Activated naive CD4-positive, alpha-beta T cell treated with anti-CD3 and anti-CD28 coated beads for 36 hours (primary cell): ENCODE measurements at regions of chr12 and their contacts with region 1.

Region 1: GRCh38 chr12:56333679-56334489 is at the start of gene PAN2:
- DNase-seq: peak; percentile 98
- H3K4me3 Mint-ChIP-seq: peak within 1 kb of the TSS; percentile 97
- H3K27ac Mint-ChIP-seq: peak within 1 kb of the TSS; percentile 100
- H3K4me1 Mint-ChIP-seq: peaks cover 44% of the 10 kb centered on the region
- H3K27me3 Mint-ChIP-seq: no peaks in the 10 kb centered on the region
- total RNA-seq, gene PAN2: 82.7 to 85.4 TPM

Region 2: GRCh38 chr12:54984658-54985376 is 1349.1 kb before region 1 on chr12 and contains the start of gene TESPA1:
- CTCF ChIA-PET with region 1: no interaction called
- intact Hi-C with region 1: loop called (anchors 10 kb)
- DNase-seq: peak; percentile 94
- H3K4me3 Mint-ChIP-seq: peak within 1 kb of the TSS; percentile 75
- H3K27ac Mint-ChIP-seq: peak within 1 kb of the TSS; percentile 89
- H3K4me1 Mint-ChIP-seq: peaks cover 56% of the 10 kb centered on the region
- H3K27me3 Mint-ChIP-seq: no peaks in the 10 kb centered on the region
- total RNA-seq, gene TESPA1: 43.9 to 45.1 TPM

Region 3: GRCh38 chr12:56189176-56189917 is 144.5 kb before region 1 on chr12 and contains the start of gene SMARCC2:
- CTCF ChIA-PET with region 1: interaction called, 3 read pairs
- intact Hi-C with region 1: loop called (anchors 1 kb)
- DNase-seq: peak; percentile 93
- H3K4me3 Mint-ChIP-seq: peak within 1 kb of the TSS; percentile 95
- H3K27ac Mint-ChIP-seq: peak within 1 kb of the TSS; percentile 92
- H3K4me1 Mint-ChIP-seq: peaks cover 33% of the 10 kb centered on the region
- H3K27me3 Mint-ChIP-seq: no peaks in the 10 kb centered on the region
- total RNA-seq, gene SMARCC2: 75.8 to 79.0 TPM

Region 4: DNA sequence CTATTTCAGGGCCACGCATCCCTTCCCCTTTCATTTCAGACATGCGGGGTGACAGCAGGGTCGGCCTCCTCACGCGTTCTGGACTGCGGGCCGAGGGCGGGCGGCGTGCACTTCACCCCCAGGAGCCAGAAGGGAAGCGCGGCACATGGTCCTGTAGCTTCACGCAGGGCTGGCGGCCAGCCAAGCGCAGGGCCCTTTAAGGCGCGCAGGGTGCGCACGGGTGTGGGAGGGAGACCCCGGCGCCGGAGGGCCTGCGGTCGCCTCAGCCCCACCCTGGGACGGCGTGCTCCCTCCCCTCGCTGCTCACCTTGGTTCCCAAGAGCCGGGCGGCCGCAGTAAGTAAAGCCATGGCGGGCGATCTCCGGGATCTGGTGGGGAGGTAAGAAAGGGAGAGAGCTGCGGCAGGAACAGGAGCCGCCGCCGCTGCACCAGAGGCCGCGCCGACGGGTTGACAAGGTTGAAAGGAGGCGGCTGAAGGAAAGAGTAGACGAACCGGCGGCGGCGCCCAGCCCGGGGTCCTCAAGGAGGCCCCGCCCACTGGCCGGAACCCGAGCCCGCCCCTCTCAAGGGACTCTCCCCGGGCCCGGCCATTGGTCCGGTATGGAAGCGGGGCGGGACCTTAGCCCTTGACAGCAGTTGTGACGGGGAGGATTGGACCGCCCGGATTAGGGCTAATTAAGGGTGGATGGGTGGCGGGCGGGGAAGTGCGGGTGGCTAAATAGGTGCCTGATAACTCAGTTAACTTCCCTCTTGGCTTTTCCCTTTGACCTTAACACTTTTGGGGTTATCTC is 33.8 kb before region 1 on chr12 and contains the start of gene CS:
- CTCF ChIA-PET with region 1: interaction called, 4 read pairs
- intact Hi-C with region 1: loop called (anchors 1 kb)
- DNase-seq: peak; percentile 99
- H3K4me3 Mint-ChIP-seq: peak within 1 kb of the TSS; percentile 91
- H3K27ac Mint-ChIP-seq: peak within 1 kb of the TSS; percentile 92
- H3K4me1 Mint-ChIP-seq: peaks cover 42% of the 10 kb centered on the region
- H3K27me3 Mint-ChIP-seq: no peaks in the 10 kb centered on the region
- total RNA-seq, gene CS: 330 to 336 TPM

Region 5: DNA sequence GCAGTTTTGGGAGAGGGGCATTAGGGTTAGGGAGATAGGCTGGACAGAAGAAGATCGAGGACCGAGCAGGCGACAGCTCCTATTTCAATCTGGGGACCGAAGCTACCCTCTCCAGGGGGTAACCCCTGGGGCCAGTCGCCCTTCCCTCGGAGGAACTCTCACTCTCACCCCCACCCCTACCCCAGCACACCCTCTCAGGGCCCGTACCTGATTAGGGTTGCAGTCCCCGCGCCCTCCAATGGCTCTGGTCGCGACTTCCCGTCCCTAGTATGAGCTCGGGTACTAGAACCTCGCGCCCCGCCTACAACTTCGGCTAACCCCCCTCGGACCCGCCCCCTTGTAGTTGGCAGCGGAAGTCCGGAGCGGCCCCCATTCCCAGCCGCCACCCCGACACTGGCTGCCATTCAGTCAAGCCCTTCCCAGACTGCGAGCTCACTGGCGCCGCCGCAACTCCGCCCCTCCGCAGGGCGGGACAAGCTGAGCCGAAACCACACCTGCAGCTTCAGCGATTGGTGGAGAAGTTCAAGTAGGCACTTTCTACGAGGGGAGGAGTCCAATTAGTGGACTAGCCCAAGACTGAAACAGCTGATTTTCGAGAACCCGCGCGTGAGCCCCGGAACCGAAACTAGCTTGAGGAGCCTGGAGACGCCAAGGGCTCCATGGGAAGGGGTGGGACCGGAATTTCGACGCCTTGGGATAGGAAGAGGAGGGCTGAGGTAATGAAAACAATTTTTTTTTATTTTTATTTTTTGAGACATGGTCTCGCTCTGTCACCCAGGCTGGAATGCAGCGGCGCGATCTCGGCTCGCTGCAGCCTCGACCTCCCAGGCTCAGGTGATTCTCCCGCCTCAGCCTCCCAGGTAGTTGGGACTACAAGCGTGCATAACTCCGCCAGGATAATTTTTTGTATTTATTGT is 26.2 kb after region 1 on chr12 and contains the start of gene STAT2:
- CTCF ChIA-PET with region 1: interaction called, 18 read pairs
- intact Hi-C with region 1: loop called (anchors 1 kb)
- DNase-seq: peak; percentile 99
- H3K4me3 Mint-ChIP-seq: peak within 1 kb of the TSS; percentile 93
- H3K27ac Mint-ChIP-seq: peak within 1 kb of the TSS; percentile 93
- H3K4me1 Mint-ChIP-seq: peaks cover 20% of the 10 kb centered on the region
- H3K27me3 Mint-ChIP-seq: no peaks in the 10 kb centered on the region
- total RNA-seq, gene STAT2: 109 to 119 TPM

Region 6: GRCh38 chr12:57078519-57079404 is 744.9 kb after region 1 on chr12 and contains the start of gene NEMP1:
- CTCF ChIA-PET with region 1: no interaction called
- intact Hi-C with region 1: loop called (anchors 10 kb)
- DNase-seq: peak; percentile 98
- H3K4me3 Mint-ChIP-seq: peak within 1 kb of the TSS; percentile 99
- H3K27ac Mint-ChIP-seq: peak within 1 kb of the TSS; percentile 98
- H3K4me1 Mint-ChIP-seq: peaks cover 37% of the 10 kb centered on the region
- H3K27me3 Mint-ChIP-seq: no peaks in the 10 kb centered on the region
- total RNA-seq, gene NEMP1: 71.3 to 72.2 TPM